Activated naive CD4-positive, alpha-beta T cell treated with anti-CD3 and anti-CD28 coated beads for 36 hours (primary cell): ENCODE measurements at regions of chr11 and their contacts with region 1.

Region 1: DNA sequence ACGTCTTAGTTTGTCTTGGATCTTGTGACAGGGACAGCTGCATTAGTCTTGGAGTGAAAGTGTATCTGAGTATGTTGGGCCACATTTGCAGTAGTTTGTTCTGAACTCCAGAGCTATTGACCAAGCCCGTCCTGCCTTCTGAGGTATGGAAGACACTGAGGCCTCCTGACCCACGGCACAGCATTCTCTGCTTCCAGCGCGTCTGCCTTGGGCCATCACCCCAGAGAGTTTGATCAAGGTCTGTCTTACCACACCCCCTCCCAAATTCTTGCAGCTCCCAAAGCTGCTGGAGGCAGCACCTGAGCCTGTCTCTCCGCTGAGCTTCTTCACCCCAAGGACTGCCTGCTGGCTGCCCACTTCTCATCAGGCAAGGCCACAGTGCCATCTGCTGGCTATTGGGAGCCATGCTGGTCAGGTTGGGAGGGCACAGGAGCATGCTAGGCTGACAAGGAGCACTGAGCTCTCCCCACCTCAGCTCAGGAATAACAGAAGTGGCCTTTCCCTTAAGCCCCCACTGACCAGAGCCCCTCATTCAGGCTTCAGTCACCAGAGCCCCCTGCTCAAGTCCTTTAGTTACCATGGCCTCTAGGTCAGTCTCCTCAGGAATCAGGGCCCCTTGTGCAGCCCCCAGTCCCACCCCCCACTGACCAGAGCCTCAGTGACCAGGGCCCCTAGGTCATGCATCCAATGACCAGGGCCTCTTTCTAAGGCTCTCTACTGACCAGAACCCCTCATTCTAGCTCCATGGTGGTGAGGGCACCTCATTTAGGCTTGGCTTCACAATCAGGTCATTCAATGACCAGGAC is 27.2 kb upstream of the SMPD1 start:
- DNase-seq: peak; percentile 86
- H3K4me3 Mint-ChIP-seq: no peak overlapping the region
- H3K27ac Mint-ChIP-seq: no peak overlapping the region
- H3K4me1 Mint-ChIP-seq: no peaks in the 10 kb centered on the region
- H3K27me3 Mint-ChIP-seq: no peaks in the 10 kb centered on the region

Region 2: GRCh38 chr11:5983443-5983842 is 379.6 kb before region 1 on chr11:
- CTCF ChIA-PET with region 1: no interaction called
- intact Hi-C with region 1: no loop called
- DNase-seq: no peak
- H3K4me3 Mint-ChIP-seq: no peak overlapping the region
- H3K27ac Mint-ChIP-seq: no peak overlapping the region
- H3K4me1 Mint-ChIP-seq: no peaks in the 10 kb centered on the region
- H3K27me3 Mint-ChIP-seq: peaks cover 10% of the 10 kb centered on the region

Region 3: GRCh38 chr11:6251120-6251733 is 111.8 kb before region 1 on chr11:
- CTCF ChIA-PET with region 1: interaction called, 66 read pairs
- intact Hi-C with region 1: no loop called
- DNase-seq: peak; percentile 73
- H3K4me3 Mint-ChIP-seq: no peak overlapping the region
- H3K27ac Mint-ChIP-seq: no peak overlapping the region
- H3K4me1 Mint-ChIP-seq: no peaks in the 10 kb centered on the region
- H3K27me3 Mint-ChIP-seq: no peaks in the 10 kb centered on the region

Region 4: DNA sequence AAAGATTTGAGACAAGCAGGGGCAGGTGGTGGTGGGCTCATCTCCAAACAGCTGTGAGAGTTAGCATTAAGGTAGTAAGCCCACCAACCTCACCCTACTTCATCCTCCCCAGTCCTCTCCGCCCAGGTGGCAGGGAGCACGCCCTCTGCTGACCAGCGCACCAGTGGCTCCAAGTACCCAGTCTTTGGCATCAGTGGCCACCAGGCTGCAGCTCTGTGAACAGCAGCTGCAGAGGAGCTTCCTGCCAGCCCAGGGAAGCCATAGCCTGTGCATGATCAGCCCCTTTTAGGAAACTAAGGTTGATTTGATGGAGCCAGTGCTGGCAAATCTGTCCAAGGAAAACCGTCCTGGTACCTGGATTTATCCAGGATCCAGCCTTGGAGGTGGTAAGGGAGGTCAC is 64.5 kb before region 1 on chr11:
- CTCF ChIA-PET with region 1: interaction called, 25 read pairs
- intact Hi-C with region 1: loop called (anchors 1 kb)
- DNase-seq: peak; percentile 43
- H3K4me3 Mint-ChIP-seq: no peak overlapping the region
- H3K27ac Mint-ChIP-seq: no peak overlapping the region
- H3K4me1 Mint-ChIP-seq: no peaks in the 10 kb centered on the region
- H3K27me3 Mint-ChIP-seq: peaks cover 4% of the 10 kb centered on the region

Region 5: GRCh38 chr11:6321961-6322362 is 41.1 kb before region 1 on chr11:
- CTCF ChIA-PET with region 1: interaction called, 11 read pairs
- intact Hi-C with region 1: no loop called
- DNase-seq: no peak
- H3K4me3 Mint-ChIP-seq: no peak overlapping the region
- H3K27ac Mint-ChIP-seq: peak overlapping the region; percentile 57
- H3K4me1 Mint-ChIP-seq: peaks cover 26% of the 10 kb centered on the region
- H3K27me3 Mint-ChIP-seq: peaks cover 37% of the 10 kb centered on the region

Region 6: GRCh38 chr11:6505577-6506240 is 142.6 kb after region 1 on chr11:
- CTCF ChIA-PET with region 1: interaction called, 10 read pairs
- intact Hi-C with region 1: no loop called
- DNase-seq: peak; percentile 21
- H3K4me3 Mint-ChIP-seq: no peak overlapping the region
- H3K27ac Mint-ChIP-seq: no peak overlapping the region
- H3K4me1 Mint-ChIP-seq: no peaks in the 10 kb centered on the region
- H3K27me3 Mint-ChIP-seq: no peaks in the 10 kb centered on the region